PC-3 (cell line): ENCODE measurements at regions of chr7 and their contacts with region 1.

Region 1: DNA sequence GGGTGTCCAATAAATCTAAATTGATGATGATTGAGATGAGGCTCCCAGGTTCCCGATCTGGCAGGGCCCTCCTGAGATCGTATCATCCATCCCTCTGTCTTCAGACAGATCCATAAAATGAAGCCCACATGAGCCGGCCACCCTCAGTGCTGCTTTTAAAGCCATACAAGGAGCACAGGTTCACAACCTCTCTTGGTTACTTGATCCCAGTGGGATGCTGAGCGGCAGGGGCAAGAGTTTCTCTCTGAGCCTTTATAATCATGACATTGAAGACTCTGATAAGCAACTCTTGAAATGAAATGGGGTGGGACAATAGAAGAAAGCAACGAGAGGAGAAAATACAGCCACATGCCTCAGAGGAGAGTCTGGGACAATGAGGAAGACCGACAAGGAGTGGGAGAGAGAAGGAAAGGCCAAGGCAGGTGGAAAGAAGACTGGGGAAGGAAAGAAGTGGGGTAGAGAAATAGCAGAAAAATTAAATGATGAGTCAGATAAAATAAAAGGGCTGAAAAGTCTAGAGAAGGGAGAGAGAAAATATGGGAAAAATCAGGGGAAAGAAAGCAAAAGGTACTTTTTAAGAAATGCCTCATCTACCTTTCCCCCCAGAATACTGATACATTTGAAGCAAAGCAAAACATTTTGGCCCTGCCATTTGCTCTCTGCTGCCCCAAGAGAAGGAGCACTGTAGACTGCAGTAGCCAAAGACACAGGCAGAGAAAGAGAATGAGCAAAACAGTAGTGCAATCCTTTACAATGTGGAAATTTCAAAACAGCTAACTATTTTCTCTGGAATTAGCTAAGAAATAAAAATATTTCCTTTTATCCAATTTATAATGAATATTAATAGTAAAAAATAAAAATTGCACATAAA is 14.6 kb downstream of the GBX1 start:
- DNase-seq: no peak
- ATAC-seq: no peak
- H3K4me3 ChIP-seq: no peak overlapping the region
- H3K27ac ChIP-seq: no peak overlapping the region
- H3K4me1 ChIP-seq: peaks cover 5% of the 10 kb centered on the region
- H3K27me3 ChIP-seq: peaks cover 15% of the 10 kb centered on the region
- CTCF ChIP-seq: 0 out of 2 replicates have a peak, but pooled peaks have one; percentile 21

Region 2: DNA sequence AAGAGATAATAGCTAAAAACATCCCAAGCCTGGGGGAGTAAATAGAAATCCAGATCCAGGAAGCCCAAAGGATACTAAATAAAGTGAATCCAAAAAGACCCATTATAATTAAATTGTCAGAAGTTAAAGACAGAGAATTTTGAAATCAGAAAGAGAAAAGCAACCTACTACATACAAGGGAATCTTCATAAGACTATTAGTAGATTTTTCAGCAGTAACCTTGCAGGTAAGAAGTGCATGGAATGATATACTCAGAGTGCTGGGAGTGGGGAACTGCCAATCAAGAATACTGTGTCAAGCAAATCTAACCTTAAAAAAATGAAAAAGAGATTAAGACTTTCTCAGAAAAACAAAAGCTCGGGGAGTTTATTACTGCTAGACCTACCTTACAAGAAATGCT is 449.7 kb before region 1 on chr7:
- CTCF ChIA-PET with region 1: no interaction called
- POLR2A ChIA-PET with region 1: no interaction called
- intact Hi-C with region 1: no loop called
- DNase-seq: no peak
- ATAC-seq: no peak
- H3K4me3 ChIP-seq: no peak overlapping the region
- H3K27ac ChIP-seq: no peak overlapping the region
- H3K4me1 ChIP-seq: no peaks in the 10 kb centered on the region
- H3K27me3 ChIP-seq: no peaks in the 10 kb centered on the region
- CTCF ChIP-seq: no peak

Region 3: DNA sequence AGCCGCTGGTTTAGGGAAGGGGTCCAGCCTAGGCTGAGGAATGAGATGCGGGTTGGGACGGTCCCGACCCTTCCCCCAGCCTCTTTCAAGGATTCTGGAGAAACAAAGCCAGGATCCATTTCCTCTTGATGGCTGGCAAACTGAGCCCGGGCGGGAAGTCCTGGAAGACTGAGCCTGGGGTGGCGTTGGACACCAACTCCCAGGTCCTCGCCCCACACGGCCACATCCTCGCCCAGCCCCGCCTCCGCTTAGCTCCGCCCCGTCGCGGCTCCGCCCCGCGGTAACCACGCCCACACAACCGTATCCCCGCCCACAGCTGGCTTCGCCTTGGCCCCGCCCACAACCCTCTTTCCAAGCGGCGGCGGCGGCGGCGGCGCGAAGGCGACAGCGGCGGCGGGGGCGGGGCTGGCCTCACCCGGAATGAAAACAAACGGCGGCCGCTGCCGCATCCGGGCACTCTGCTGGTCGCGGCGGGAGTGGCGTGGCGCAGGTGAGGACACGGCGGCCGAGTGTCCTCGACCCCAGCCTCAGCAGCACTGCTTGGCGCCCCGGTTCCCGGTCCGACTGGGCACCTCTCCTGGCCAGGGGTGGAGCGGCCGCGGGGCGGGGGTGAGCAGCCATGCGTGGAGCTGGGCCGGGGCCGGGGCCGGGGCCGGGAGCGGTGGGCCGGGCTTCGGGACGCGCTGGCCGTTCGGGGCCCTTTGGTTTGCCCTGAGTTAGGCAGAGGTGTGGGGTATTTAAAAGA is 188.7 kb after region 1 on chr7 and contains the start of gene NUB1:
- CTCF ChIA-PET with region 1: no interaction called
- POLR2A ChIA-PET with region 1: interaction called, 10 read pairs
- intact Hi-C with region 1: no loop called
- DNase-seq: peak; percentile 83
- ATAC-seq: peak; percentile 94
- H3K4me3 ChIP-seq: peak within 1 kb of the TSS; percentile 89
- H3K27ac ChIP-seq: no peak within 1 kb of the TSS
- H3K4me1 ChIP-seq: peaks cover 9% of the 10 kb centered on the region
- H3K27me3 ChIP-seq: no peaks in the 10 kb centered on the region
- CTCF ChIP-seq: no peak
- total RNA-seq, gene NUB1: 40.1 and 47.0 TPM in 2 replicates